Psoas muscle (tissue), 8 donors: ENCODE measurements at regions of chr17 and their contacts with region 1.

Region 1: GRCh38 chr17:22217135-22217534 is 524.8 kb downstream of the KCNJ18 start:
- DNase-seq: no peak
- ATAC-seq: no peak
- H3K4me3 ChIP-seq: no peak overlapping the region
- H3K27ac ChIP-seq: no peak overlapping the region
- H3K4me1 ChIP-seq: no peaks in the 10 kb centered on the region
- H3K27me3 ChIP-seq: no peaks in the 10 kb centered on the region
- CTCF ChIP-seq: no peak

Region 2: DNA sequence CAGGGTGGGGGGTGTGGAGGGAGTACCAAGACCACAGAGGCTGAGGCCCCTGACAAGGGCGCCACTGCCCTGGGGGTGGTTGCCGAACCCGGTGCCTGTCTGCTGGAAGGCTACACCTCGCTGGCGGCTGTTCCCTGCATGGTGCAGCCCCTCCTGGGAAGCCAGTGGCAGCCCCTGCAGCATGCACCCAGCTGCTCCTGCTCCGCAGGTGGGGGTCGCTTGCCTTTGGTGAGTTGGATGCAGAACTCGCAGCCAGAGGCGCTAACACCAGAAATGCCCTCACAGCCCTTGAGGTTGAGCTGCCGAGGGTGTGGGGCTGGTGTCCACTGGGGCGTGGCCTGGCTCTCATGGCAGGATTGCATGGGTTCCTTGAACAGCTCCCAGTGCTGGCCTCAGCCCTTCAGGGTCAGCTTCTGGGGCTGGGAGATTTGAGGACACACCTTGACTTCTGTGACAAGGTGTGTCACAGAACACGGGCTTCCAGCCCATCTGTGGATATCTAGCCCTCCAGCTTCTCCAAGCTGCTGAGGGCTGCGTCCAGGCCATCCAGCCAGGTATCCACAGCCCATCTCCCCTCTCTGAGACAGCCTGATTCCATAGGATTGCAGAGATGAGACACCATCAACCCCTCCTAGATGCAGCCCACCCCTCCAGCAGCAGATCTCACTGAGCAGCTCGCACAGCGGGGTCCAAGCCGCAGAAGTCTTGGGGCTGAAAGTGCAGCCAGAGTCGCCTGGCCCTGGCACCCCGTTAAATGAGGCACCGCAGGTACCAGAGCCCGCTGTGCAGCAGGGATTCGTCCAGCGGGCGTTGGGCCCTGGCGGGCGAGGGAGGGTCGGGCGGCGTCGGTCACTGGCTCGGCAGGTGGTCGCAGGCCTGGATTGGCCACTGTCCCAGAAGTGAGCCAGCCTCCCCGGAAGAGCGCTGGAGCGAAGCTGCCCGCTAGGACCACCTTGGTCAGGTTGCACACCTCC is 61.5 kb after region 1 on chr17:
- intact Hi-C with region 1: loop called in 1 of 2 experiments (anchors 10 kb)
- DNase-seq: no peak
- ATAC-seq: no peak
- H3K4me3 ChIP-seq: no peak overlapping the region
- H3K27ac ChIP-seq: no peak overlapping the region
- H3K4me1 ChIP-seq: no peaks in the 10 kb centered on the region
- H3K27me3 ChIP-seq: no peaks in the 10 kb centered on the region
- CTCF ChIP-seq: no peak

Region 3: DNA sequence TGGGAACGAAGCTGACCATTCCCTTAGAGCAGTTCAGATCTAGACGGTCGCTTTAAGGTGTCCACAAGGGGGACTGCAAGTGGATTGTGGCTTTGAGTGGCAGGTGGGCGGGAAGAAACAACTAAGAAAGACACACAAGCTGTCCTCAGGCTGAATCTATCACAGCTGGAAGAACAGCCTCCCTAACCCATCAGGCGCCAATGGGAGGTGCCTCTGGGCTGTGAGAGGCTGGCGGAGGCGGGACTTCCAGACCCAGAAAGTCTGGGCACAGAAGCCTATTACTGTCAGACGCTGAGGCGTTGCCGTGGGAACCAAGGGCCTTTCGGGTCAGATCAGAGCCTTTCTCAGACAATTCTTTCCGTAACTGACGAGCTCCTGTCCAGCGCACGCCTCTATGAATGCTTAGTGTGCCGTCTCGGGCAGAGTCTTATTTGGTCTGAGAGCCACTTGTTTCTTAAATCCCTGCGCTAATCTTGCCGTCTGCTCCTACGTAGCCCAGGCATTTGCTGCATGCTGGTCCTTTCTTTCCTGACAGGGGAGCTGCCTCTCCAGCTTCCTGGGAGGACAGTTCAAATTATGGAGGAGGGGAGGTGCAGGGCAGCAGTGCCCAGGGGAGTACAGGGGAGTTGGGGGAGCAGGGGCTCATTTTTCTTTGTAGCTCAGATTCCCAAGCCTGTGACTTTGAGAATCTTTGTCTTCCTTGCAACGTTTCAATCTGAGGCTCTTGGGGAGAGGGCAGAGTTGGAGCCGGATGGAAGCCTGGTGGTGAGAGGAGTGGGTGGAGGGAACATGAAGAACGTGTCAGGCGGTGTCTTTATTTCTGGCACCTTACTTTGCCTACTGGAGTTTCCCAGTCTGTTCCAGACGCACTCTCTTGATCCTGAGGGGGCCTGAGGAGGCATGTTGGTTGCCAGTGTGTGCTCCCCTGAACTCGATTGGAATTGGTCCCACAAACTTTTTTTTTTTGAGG is 93.9 kb after region 1 on chr17:
- intact Hi-C with region 1: no loop called
- DNase-seq: no peak
- ATAC-seq: no peak
- H3K4me3 ChIP-seq: no peak overlapping the region
- H3K27ac ChIP-seq: no peak overlapping the region
- H3K4me1 ChIP-seq: no peaks in the 10 kb centered on the region
- H3K27me3 ChIP-seq: no peaks in the 10 kb centered on the region
- CTCF ChIP-seq: no peak